H1 (cell line): ENCODE measurements at regions of chr1 and their contacts with region 1.

Region 1: GRCh38 chr1:116418091-116418830 is 45.2 kb downstream of the ATP1A1 start:
- DNase-seq: peak; percentile 53 to 92
- H3K4me3 ChIP-seq: peak overlapping the region; percentile 68 to 95 (median 82)
- H3K27ac ChIP-seq: peak overlapping the region; percentile 24; the same call in 1 of the 2 replicates
- H3K4me1 ChIP-seq: peaks cover 0 to 11% (median 6%) of the 10 kb centered on the region in 4 experiments; a peak in 6 of 7 replicates
- H3K27me3 ChIP-seq: no peaks in the 10 kb centered on the region
- CTCF ChIP-seq: no peak
- EP300 ChIP-seq: no peak
- POLR2A ChIP-seq: peak; percentile 76 to 94
- RAD21 ChIP-seq: peak in 1 of 2 experiments; percentile 11; a peak in 2 of 4 replicates

Region 2: DNA sequence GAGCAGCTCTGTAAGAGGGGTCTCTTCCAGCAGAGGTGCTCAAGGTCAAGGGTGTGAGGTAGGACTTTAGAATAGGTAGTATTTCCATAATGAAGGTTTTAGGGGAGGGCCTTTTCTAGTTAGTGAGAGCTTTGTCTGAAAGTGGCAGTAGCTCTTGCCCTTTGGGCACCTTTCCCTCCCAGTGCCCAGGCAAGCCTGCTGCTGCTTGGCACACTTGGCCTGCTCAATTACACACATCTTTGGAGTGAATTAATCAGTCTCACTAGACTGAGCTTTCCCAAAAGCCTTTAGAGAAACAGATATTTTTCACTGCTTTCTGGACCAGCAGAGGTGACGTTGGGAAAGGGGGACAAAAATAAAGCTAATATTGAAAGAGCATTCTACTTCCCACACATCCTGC is 259.1 kb before region 1 on chr1:
- CTCF ChIA-PET with region 1: no interaction called
- POLR2A ChIA-PET with region 1: no interaction called
- DNase-seq: no peak
- H3K4me3 ChIP-seq: no peak overlapping the region
- H3K27ac ChIP-seq: no peak overlapping the region
- H3K4me1 ChIP-seq: peaks cover 0 to 3% (median 0%) of the 10 kb centered on the region in 4 experiments; a peak in 1 of 7 replicates
- H3K27me3 ChIP-seq: no peaks in the 10 kb centered on the region; a peak in 1 of 7 replicates
- CTCF ChIP-seq: no peak
- EP300 ChIP-seq: no peak
- POLR2A ChIP-seq: no peak
- RAD21 ChIP-seq: no peak

Region 3: DNA sequence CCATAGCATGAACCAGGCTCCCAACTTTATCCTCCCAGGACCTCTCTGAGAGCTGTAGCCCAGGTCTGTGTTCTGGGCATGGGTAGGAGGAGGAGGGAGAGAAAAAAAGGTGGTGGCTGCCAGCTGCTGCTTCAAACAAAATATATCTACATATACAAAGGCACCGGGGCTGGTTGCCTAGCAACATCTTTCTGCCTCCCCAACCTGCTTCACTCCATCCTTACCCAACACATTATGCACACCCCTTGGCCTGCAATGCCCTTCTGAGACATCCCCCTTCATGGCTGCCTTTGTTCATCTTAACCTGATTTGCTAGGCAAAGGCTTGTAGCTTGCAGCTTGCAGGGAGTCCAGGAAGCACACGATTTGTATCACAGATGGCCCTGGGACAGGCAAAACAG is 72.4 kb before region 1 on chr1:
- CTCF ChIA-PET with region 1: no interaction called
- POLR2A ChIA-PET with region 1: no interaction called
- DNase-seq: no peak
- H3K4me3 ChIP-seq: no peak overlapping the region
- H3K27ac ChIP-seq: no peak overlapping the region
- H3K4me1 ChIP-seq: peaks cover 0 to 15% (median 9%) of the 10 kb centered on the region in 4 experiments; a peak in 6 of 7 replicates
- H3K27me3 ChIP-seq: no peaks in the 10 kb centered on the region
- CTCF ChIP-seq: no peak
- EP300 ChIP-seq: no peak
- POLR2A ChIP-seq: no peak
- RAD21 ChIP-seq: no peak

Region 4: DNA sequence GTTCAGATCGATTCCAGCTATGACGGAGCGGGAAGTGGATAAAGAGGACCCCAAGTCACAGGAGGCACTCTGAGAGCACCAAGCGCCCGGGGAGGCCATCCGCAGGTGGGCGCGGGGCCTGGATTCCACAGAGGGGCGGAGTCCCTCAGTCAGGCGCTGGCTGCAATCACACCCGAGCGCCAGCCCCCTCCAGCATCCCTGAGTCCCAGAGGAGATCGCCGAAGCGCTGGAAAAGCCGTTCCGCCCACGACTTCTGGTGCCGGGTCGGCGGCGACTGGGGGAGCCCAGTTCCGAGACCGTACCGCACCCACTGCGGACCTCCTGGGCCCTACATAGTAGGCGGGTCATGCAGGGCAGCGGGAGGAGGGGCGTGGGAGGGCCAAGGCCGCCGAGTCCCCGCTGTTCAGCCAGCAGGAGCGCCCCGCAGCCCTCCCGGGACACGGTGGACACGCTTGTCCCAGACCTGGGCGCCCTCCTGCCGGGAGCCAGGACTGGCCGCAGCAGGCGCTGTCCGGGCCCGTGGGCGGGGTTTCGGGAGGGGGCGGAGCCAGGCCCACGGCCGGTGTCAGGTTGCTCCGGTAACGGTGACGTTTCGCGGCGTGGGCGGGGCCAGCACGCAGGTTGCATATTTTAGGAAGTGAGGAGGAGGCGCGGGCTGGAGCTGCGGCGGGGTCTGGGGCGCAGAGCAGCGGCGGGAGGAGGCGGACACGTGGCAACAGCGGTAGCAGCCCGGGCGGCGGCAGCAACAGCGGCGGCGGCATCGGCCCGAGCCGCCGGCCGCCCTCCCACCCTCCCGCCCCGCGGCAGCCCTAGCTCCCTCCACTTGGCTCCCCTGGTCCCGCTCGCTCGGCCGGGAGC is 45.4 kb before region 1 on chr1 and contains the start of gene ATP1A1:
- CTCF ChIA-PET with region 1: no interaction called
- POLR2A ChIA-PET with region 1: interaction called, 21 read pairs
- DNase-seq: peak; percentile 89 to 99
- H3K4me3 ChIP-seq: peak within 1 kb of the TSS; percentile 84 to 89 (median 86)
- H3K27ac ChIP-seq: peak within 1 kb of the TSS; percentile 92
- H3K4me1 ChIP-seq: peaks cover 3 to 19% (median 17%) of the 10 kb centered on the region in 4 experiments
- H3K27me3 ChIP-seq: no peaks in the 10 kb centered on the region; a peak in 3 of 7 replicates
- CTCF ChIP-seq: no peak
- EP300 ChIP-seq: peak; percentile 7 to 98; a peak in 1 of 3 replicates
- POLR2A ChIP-seq: peak; percentile 95 to 96
- RAD21 ChIP-seq: 0 out of 4 replicates have a peak, but pooled peaks of 1 of the 2 experiments have one; percentile 3
- total RNA-seq, gene ATP1A1: 325 and 326 TPM in 2 replicates

Region 5: GRCh38 chr1:116405241-116406135 is 12.8 kb before region 1 on chr1:
- CTCF ChIA-PET with region 1: interaction called, 9 read pairs
- POLR2A ChIA-PET with region 1: interaction called, 23 read pairs
- DNase-seq: no peak
- H3K4me3 ChIP-seq: no peak overlapping the region
- H3K27ac ChIP-seq: no peak overlapping the region
- H3K4me1 ChIP-seq: no peaks in the 10 kb centered on the region
- H3K27me3 ChIP-seq: peaks cover 0 to 1% (median 0%) of the 10 kb centered on the region in 4 experiments; a peak in 1 of 7 replicates
- CTCF ChIP-seq: no peak
- EP300 ChIP-seq: no peak
- POLR2A ChIP-seq: no peak
- RAD21 ChIP-seq: no peak

Region 6: GRCh38 chr1:116429821-116430374 is 11.6 kb after region 1 on chr1:
- CTCF ChIA-PET with region 1: interaction called, 16 read pairs
- POLR2A ChIA-PET with region 1: interaction called, 5 read pairs
- DNase-seq: no peak
- H3K4me3 ChIP-seq: no peak overlapping the region
- H3K27ac ChIP-seq: no peak overlapping the region
- H3K4me1 ChIP-seq: peaks cover 0 to 3% (median 0%) of the 10 kb centered on the region in 4 experiments; a peak in 1 of 7 replicates
- H3K27me3 ChIP-seq: no peaks in the 10 kb centered on the region
- CTCF ChIP-seq: no peak
- EP300 ChIP-seq: no peak
- POLR2A ChIP-seq: no peak
- RAD21 ChIP-seq: no peak

Region 7: DNA sequence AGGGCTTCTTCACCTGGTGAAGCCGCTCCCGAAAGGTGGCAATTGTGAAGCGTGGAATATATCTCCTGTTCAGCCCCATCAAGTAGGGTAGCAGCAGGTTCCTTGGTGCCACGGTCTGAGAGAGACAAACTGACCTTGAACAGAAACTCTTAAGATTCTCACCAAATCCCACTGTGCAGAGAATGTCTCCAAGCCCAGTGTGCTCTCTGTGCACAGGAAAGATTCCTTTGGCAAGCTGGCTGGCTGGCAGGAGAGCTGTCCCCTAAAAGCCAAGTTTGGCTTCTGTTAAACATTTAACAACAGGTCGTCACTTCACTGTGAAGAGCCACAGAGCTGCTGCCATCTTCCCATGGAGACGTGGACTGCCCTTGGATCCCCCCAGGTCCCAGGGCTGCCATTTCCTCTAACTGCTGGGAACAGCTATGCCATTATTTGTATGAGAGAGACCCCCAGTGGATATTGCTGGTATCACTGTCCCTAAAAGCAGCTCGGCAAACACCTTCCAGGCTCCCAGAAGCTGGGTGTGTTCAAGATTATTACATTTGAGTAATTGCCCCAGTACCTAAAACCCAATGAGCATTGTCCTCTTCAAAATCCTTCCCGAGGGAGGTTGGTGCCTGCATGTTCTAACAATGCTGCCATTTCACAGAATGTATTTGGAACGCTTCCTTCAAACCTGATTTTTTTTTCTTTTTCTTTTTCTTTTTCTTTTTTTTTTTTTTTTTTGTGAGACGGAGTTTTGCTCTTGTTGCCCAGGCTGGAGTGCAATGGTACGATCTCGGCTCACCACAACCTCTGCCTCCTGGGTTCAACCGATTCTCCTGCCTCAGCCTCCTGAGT is 80.7 kb after region 1 on chr1:
- CTCF ChIA-PET with region 1: interaction called, 15 read pairs
- POLR2A ChIA-PET with region 1: no interaction called
- DNase-seq: peak; percentile 34 to 77
- H3K4me3 ChIP-seq: no peak overlapping the region
- H3K27ac ChIP-seq: no peak overlapping the region
- H3K4me1 ChIP-seq: no peaks in the 10 kb centered on the region; a peak in 1 of 7 replicates
- H3K27me3 ChIP-seq: no peaks in the 10 kb centered on the region
- CTCF ChIP-seq: peak; percentile 33 to 81 (median 78)
- EP300 ChIP-seq: no peak
- POLR2A ChIP-seq: no peak
- RAD21 ChIP-seq: peak; percentile 97

Region 8: GRCh38 chr1:116559304-116559761 is 141.1 kb after region 1 on chr1:
- CTCF ChIA-PET with region 1: no interaction called
- POLR2A ChIA-PET with region 1: no interaction called
- DNase-seq: no peak
- H3K4me3 ChIP-seq: no peak overlapping the region
- H3K27ac ChIP-seq: no peak overlapping the region
- H3K4me1 ChIP-seq: no peaks in the 10 kb centered on the region
- H3K27me3 ChIP-seq: no peaks in the 10 kb centered on the region
- CTCF ChIP-seq: no peak
- EP300 ChIP-seq: no peak
- POLR2A ChIP-seq: no peak
- RAD21 ChIP-seq: no peak

Region 9: DNA sequence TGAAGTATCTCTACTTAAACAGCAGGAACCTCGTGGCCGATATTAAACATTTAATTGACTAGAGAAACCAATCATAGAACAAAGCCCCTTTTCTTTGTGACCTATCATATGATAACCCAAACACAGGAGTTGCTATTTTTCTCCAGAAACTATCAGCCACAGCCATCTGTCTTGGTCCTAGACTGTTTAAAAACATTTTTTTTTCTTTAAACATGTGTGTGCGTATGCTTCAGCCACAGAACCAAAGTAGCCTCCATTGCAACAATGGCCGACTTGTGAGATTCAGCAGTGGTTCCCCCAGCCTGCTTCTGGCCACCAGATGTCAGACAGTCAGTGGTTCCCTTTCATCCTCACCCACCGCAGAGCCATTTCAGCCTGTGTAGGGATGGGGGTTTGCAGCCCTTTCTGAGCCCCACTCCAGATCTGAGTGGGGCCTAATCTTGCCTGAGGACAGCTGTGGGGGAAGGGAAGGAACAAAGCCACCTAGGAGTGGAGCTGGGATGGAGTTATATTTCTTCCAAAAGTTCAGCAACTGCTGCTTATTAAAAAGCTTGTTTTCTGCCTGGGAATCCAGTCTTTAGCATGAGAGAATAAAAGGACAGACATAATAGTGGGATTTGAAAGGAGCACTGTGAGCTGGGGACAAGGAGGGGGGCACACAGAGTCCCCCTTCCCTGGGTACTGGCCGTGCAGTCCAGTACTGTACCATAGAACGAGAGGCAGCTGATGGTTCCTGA is 261.0 kb after region 1 on chr1:
- CTCF ChIA-PET with region 1: no interaction called
- POLR2A ChIA-PET with region 1: no interaction called
- DNase-seq: no peak
- H3K4me3 ChIP-seq: no peak overlapping the region
- H3K27ac ChIP-seq: no peak overlapping the region
- H3K4me1 ChIP-seq: no peaks in the 10 kb centered on the region
- H3K27me3 ChIP-seq: no peaks in the 10 kb centered on the region
- CTCF ChIP-seq: peak in 1 of 3 experiments; percentile 13; a peak in 1 of 4 replicates
- EP300 ChIP-seq: no peak
- POLR2A ChIP-seq: no peak
- RAD21 ChIP-seq: peak in 1 of 2 experiments; percentile 8; a peak in 1 of 4 replicates